ENCODE measurements at regions of chr1 and their contacts with region 1.

Region 1: DNA sequence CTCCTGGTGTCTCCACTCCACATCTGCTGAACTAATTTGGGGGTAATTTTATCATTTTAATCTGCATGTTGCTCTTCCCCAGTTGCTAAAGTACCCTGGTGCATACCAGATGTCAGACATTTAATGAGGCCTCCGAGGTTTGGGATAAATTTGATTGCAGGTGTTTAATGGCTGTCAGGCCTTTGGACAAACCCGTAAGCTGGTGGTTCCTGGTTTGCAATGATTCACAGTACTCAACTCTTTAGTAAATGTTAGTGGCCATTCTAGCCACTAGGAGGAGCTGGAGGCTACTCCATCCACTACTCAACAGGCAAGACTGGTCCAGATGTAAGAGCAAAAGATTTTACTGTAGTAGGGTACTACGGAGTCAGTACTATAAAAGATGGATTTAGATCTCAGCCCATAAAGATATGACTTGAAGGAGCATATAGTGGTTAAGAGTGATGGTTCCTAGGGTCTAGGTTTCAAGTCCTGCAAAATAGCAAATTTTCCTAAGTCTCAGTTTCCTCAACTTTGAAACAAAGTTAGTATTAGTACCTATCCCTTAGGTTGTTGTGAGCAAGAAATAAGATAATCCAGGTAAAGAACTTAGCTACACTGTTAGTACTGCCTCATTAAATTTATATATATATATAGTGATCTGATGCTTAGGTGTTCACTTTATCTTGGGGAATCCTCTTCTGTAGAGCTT is 132.8 kb downstream of the SNX7 start:
- DNase-seq: peak; percentile 48
- H3K4me3 ChIP-seq: no peak overlapping the region
- H3K27ac ChIP-seq: no peak overlapping the region
- H3K27me3 ChIP-seq: peaks cover 6% of the 10 kb centered on the region
- CTCF ChIP-seq: peak; percentile 93

Region 2: GRCh38 chr1:98783821-98784220 is 10.5 kb before region 1 on chr1:
- CTCF ChIA-PET with region 1: interaction called, 13 read pairs
- POLR2A ChIA-PET with region 1: no interaction called
- DNase-seq: no peak
- H3K4me3 ChIP-seq: no peak overlapping the region
- H3K27ac ChIP-seq: no peak overlapping the region
- H3K27me3 ChIP-seq: no peaks in the 10 kb centered on the region
- CTCF ChIP-seq: no peak